ENCODE measurements at regions of chr17 and their contacts with region 1.

Region 1: DNA sequence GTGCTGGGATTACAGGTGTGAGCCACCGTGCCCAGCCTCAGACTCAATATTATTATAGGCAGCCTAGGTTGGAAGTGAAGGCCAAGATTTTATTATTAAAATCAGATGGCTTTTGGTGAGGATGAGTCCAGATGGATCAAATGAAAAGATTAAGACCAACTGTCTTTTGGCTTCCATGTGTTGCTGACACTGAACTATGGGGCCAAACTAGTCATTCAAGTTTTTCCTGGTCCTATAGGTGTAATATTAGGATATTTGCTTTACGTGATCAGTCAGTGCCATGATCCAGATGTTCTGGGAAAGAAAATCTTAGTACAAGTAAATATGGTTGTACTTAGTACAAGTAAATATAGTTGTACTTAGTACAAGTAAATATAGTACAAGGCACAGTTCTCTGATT is 140.6 kb downstream of the MAP2K6 start:
- DNase-seq: no peak
- H3K4me3 Mint-ChIP-seq: no peak overlapping the region
- H3K27ac Mint-ChIP-seq: no peak overlapping the region
- H3K4me1 Mint-ChIP-seq: peaks cover under 1% of the 10 kb centered on the region
- H3K27me3 Mint-ChIP-seq: no peaks in the 10 kb centered on the region
- CTCF ChIP-seq: no peak

Region 2: DNA sequence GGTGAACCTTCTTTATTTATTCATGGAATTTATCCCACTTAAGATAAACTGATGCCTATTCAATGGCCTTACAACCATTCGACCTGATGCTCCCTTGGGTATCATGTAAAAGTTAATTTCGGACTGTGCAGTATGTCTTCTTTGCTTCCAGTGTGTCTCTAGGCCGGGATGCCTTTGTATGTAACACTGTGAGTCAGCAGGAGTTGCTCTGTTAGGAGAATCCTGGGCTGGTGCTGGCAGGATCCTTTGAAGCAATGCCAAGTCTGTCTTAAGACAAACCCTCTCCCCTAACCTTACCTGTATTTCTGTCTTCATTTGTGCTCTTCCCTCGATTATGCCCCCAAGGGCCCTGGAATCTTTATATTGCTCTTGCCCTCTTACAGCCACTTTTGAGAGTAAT is 561.9 kb before region 1 on chr17:
- CTCF ChIA-PET with region 1: interaction called, 14 read pairs
- intact Hi-C with region 1: no loop called
- DNase-seq: no peak
- H3K4me3 Mint-ChIP-seq: no peak overlapping the region
- H3K27ac Mint-ChIP-seq: no peak overlapping the region
- H3K4me1 Mint-ChIP-seq: peaks cover 9% of the 10 kb centered on the region
- H3K27me3 Mint-ChIP-seq: no peaks in the 10 kb centered on the region
- CTCF ChIP-seq: no peak

Region 3: GRCh38 chr17:69451416-69452394 is 103.4 kb before region 1 on chr17:
- CTCF ChIA-PET with region 1: no interaction called
- intact Hi-C with region 1: no loop called
- DNase-seq: no peak
- H3K4me3 Mint-ChIP-seq: no peak overlapping the region
- H3K27ac Mint-ChIP-seq: no peak overlapping the region
- H3K4me1 Mint-ChIP-seq: peaks cover 8% of the 10 kb centered on the region
- H3K27me3 Mint-ChIP-seq: no peaks in the 10 kb centered on the region
- CTCF ChIP-seq: no peak

Region 4: DNA sequence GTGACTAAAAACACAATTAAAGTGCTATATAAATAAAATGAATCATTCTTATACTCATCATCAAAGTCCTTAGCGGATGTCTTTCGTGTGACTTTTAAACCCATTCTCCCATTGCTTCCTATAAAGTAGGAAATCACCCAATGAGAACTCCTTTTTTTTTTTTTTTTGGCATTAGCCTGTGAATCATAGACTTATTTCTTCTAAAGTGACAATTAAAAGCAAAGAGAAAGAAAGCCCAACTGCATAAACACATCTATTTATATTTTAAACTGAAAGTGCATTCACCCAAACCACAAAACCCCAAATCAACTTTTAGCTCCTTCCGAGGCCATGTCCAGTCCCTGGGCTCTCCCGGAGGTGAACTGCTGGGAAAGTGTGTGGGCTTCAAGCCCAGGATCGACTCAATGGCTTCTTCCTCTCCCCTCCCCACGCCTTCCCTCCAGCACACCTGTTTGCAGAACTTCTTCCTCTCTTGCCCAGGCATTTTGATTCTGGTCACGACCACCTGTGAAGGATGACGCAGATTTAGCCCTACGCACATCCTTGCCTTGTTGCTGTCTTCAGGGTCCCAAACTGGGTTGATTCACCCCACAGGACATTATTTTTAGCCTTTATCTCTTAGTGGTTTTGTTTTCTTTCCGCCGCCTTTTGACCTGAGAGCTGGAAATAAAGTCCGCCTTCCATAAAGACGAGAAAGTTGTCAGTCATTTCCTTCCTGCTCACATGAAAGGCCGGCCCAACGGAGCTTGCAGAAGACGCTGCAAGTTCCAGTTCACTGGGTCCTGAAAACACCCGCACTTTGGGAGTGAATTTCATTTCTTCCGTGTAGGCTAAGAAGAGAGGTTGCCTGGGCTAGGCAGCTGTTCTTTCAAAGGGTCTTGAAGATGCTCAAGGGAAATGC is 26.3 kb after region 1 on chr17:
- CTCF ChIA-PET with region 1: no interaction called
- intact Hi-C with region 1: no loop called
- DNase-seq: no peak
- H3K4me3 Mint-ChIP-seq: no peak overlapping the region
- H3K27ac Mint-ChIP-seq: no peak overlapping the region
- H3K4me1 Mint-ChIP-seq: no peaks in the 10 kb centered on the region
- H3K27me3 Mint-ChIP-seq: no peaks in the 10 kb centered on the region
- CTCF ChIP-seq: no peak

Region 5: DNA sequence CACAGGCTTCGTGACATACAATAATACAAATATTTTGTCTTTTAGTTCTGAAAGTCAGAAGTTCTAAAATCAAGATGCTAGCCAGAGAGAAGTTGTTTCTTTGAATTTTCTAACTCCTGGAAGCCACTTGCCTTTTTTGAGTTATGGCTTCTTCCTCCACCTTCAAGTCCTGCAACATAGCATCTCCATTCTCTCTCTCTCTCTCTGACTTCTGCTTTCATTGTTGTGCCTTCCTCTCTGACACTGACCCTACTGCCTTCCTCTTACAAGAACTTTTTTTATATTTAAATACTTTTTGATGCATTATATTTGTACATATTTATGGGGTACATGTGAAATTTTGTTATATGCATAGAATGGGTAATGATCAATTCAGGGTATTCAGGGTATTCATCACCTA is 65.3 kb after region 1 on chr17:
- CTCF ChIA-PET with region 1: no interaction called
- intact Hi-C with region 1: no loop called
- DNase-seq: no peak
- H3K4me3 Mint-ChIP-seq: no peak overlapping the region
- H3K27ac Mint-ChIP-seq: no peak overlapping the region
- H3K4me1 Mint-ChIP-seq: no peaks in the 10 kb centered on the region
- H3K27me3 Mint-ChIP-seq: no peaks in the 10 kb centered on the region
- CTCF ChIP-seq: no peak

Region 6: DNA sequence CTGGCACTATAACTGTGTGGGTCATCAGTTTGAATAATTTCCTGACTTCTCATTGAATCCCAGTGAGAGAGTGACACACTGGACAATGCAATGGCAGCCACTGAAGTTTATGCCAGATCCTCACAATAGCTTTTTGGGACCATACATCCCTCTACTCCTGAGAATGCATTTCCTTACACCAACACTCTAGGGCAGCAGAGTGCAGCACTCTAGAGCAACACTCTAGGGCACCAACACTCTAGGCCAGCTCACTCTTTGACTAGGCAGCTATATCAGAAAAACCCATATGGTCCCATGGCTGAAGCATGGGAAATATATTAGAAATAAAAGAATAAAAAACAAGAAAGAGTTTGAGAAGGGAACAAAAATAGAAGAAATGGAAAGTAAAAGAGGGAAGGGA is 168.7 kb after region 1 on chr17:
- CTCF ChIA-PET with region 1: no interaction called
- intact Hi-C with region 1: no loop called
- DNase-seq: no peak
- H3K4me3 Mint-ChIP-seq: no peak overlapping the region
- H3K27ac Mint-ChIP-seq: no peak overlapping the region
- H3K4me1 Mint-ChIP-seq: no peaks in the 10 kb centered on the region
- H3K27me3 Mint-ChIP-seq: no peaks in the 10 kb centered on the region
- CTCF ChIP-seq: no peak

Measured in Calu3 (cell line).